ENCODE measurements at regions of chr17 and their contacts with region 1.

Region 1: DNA sequence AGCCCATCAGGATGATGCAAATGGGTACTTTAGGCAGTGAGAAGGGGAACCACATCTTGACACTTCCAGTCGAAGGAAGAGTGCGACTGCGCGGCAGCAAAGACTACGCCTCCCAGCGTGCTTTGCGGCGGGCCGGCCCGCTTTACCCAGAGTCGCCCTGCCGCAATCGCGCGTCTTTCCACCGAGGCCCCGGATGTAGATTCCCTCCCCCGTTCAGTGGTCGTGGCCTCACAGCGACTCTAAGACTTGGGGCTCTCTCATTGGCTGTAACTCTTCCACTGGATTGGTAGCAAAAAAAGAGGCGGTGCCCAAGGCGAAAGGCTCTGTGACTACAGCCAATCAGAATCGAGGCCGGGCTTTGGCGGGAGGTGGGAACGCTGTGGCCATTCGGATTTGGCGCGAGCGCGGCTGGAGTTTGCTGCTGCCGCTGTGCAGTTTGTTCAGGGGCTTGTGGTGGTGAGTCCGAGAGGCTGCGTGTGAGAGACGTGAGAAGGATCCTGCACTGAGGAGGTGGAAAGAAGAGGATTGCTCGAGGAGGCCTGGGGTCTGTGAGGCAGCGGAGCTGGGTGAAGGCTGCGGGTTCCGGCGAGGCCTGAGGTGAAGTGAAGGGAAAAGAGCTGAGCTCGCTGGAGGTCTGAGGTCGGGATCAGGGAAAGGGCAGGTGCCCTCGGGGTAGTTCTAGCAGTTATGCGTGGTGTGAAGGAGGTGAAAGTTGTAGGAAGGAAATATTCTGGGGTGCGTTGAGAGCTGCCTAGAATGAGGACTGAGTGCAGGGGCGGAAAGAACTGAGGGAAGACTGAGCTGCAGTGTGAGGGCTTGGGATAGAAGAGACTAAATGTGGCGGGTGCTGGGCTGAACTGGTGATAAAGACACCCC is at the start of gene CDC6:
- DNase-seq: peak; percentile 99 to 100
- ATAC-seq: peak; percentile 94 to 97
- H3K4me3 ChIP-seq: peak within 1 kb of the TSS; percentile 72
- H3K27ac ChIP-seq: peak within 1 kb of the TSS; percentile 70 to 83
- H3K4me1 ChIP-seq: peaks cover 34% of the 10 kb centered on the region
- CTCF ChIP-seq: no peak
- EP300 ChIP-seq: no peak; a peak in 1 of 5 replicates
- POLR2A ChIP-seq: peak; percentile 77
- RAD21 ChIP-seq: no peak
- polyA plus RNA-seq, gene CDC6: 71.4 and 79.5 TPM in 2 replicates

Region 2: DNA sequence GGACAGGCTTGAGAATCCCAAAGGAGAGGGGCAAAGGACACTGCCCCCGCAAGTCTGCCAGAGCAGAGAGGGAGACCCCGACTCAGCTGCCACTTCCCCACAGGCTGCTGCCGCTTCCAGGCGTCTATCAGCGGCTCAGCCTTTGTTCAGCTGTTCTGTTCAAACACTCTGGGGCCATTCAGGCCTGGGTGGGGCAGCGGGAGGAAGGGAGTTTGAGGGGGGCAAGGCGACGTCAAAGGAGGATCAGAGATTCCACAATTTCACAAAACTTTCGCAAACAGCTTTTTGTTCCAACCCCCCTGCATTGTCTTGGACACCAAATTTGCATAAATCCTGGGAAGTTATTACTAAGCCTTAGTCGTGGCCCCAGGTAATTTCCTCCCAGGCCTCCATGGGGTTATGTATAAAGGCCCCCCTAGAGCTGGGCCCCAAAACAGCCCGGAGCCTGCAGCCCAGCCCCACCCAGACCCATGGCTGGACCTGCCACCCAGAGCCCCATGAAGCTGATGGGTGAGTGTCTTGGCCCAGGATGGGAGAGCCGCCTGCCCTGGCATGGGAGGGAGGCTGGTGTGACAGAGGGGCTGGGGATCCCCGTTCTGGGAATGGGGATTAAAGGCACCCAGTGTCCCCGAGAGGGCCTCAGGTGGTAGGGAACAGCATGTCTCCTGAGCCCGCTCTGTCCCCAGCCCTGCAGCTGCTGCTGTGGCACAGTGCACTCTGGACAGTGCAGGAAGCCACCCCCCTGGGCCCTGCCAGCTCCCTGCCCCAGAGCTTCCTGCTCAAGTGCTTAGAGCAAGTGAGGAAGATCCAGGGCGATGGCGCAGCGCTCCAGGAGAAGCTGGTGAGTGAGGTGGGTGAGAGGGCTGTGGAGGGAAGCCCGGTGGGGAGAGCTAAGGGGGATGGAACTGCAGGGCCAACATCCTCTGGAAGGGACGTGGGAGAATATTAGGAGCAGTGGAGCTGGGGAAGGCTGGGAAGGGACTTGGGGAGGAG is 272.4 kb before region 1 on chr17 and contains the start of gene CSF3:
- CTCF ChIA-PET with region 1: interaction called, 77 read pairs
- POLR2A ChIA-PET with region 1: no interaction called
- DNase-seq: no peak
- ATAC-seq: 0 out of 6 replicates have a peak, but pooled peaks have one; percentile 1 to 4
- H3K4me3 ChIP-seq: no peak within 1 kb of the TSS
- H3K27ac ChIP-seq: peak within 1 kb of the TSS; percentile 42 to 46; a peak in 3 of 6 replicates
- H3K4me1 ChIP-seq: peaks cover 17% of the 10 kb centered on the region; the same call in 2 of the 3 replicates
- CTCF ChIP-seq: no peak
- EP300 ChIP-seq: no peak
- POLR2A ChIP-seq: no peak
- RAD21 ChIP-seq: no peak
- polyA plus RNA-seq, gene CSF3: 0.41 TPM in 1 of 2 replicates, not detected in the other

Region 3: GRCh38 chr17:40203131-40203530 is 84.6 kb before region 1 on chr17:
- CTCF ChIA-PET with region 1: interaction called, 232 read pairs
- POLR2A ChIA-PET with region 1: interaction called, 3 read pairs
- DNase-seq: no peak
- ATAC-seq: no peak
- H3K4me3 ChIP-seq: no peak overlapping the region
- H3K27ac ChIP-seq: no peak overlapping the region
- H3K4me1 ChIP-seq: no peaks in the 10 kb centered on the region
- CTCF ChIP-seq: no peak
- EP300 ChIP-seq: no peak
- POLR2A ChIP-seq: no peak
- RAD21 ChIP-seq: no peak

Region 4: GRCh38 chr17:40230670-40231069 is 57.1 kb before region 1 on chr17:
- CTCF ChIA-PET with region 1: interaction called, 13 read pairs
- POLR2A ChIA-PET with region 1: no interaction called
- DNase-seq: no peak
- ATAC-seq: no peak
- H3K4me3 ChIP-seq: no peak overlapping the region
- H3K27ac ChIP-seq: no peak overlapping the region
- H3K4me1 ChIP-seq: no peaks in the 10 kb centered on the region
- CTCF ChIP-seq: no peak
- EP300 ChIP-seq: no peak
- POLR2A ChIP-seq: no peak
- RAD21 ChIP-seq: no peak

Region 5: GRCh38 chr17:40303009-40303657 is 15.4 kb after region 1 on chr17:
- CTCF ChIA-PET with region 1: interaction called, 1,069 read pairs
- POLR2A ChIA-PET with region 1: interaction called, 4 read pairs
- DNase-seq: peak; percentile 71 to 78
- ATAC-seq: peak; percentile 65 to 79
- H3K4me3 ChIP-seq: no peak overlapping the region
- H3K27ac ChIP-seq: peak overlapping the region; percentile 17 to 47; a peak in 4 of 6 replicates
- H3K4me1 ChIP-seq: peaks cover 38% of the 10 kb centered on the region
- CTCF ChIP-seq: peak; percentile 97
- EP300 ChIP-seq: no peak
- POLR2A ChIP-seq: no peak
- RAD21 ChIP-seq: peak; percentile 96 to 98

Region 6: DNA sequence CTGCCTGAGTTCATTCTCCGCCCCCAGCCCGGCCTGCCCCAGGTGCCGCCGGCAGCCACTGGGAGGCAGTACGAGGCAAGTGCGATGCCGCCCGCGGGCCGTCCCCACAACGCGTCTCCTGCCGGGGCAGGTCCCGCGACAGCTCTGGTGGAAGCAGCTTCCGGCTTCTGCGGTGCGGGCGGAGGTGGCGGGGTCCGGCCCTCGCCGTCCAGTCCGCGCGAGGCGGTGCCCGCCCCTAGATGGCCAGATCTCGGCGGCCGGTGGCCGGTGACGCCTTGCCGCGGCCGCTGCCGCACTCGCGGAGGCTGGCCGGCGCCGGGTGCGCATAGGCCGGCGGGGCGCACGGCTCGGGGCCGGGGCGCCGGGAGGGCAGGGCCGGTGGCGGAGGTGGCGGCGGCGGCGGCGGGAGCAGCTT is 75.0 kb after region 1 on chr17:
- CTCF ChIA-PET with region 1: interaction called, 2,395 read pairs
- POLR2A ChIA-PET with region 1: interaction called, 4 read pairs
- DNase-seq: peak; percentile 93 to 97
- ATAC-seq: peak; percentile 83 to 86
- H3K4me3 ChIP-seq: peak overlapping the region; percentile 61
- H3K27ac ChIP-seq: peak overlapping the region; percentile 84 to 95
- H3K4me1 ChIP-seq: peaks cover 30% of the 10 kb centered on the region
- CTCF ChIP-seq: peak; percentile 85
- EP300 ChIP-seq: no peak
- POLR2A ChIP-seq: peak; percentile 74
- RAD21 ChIP-seq: peak; percentile 73 to 85

Measured in A549 (cell line).